CD14-positive monocyte (primary cell): ENCODE measurements at regions of chr9 and their contacts with region 1.

Region 1: DNA sequence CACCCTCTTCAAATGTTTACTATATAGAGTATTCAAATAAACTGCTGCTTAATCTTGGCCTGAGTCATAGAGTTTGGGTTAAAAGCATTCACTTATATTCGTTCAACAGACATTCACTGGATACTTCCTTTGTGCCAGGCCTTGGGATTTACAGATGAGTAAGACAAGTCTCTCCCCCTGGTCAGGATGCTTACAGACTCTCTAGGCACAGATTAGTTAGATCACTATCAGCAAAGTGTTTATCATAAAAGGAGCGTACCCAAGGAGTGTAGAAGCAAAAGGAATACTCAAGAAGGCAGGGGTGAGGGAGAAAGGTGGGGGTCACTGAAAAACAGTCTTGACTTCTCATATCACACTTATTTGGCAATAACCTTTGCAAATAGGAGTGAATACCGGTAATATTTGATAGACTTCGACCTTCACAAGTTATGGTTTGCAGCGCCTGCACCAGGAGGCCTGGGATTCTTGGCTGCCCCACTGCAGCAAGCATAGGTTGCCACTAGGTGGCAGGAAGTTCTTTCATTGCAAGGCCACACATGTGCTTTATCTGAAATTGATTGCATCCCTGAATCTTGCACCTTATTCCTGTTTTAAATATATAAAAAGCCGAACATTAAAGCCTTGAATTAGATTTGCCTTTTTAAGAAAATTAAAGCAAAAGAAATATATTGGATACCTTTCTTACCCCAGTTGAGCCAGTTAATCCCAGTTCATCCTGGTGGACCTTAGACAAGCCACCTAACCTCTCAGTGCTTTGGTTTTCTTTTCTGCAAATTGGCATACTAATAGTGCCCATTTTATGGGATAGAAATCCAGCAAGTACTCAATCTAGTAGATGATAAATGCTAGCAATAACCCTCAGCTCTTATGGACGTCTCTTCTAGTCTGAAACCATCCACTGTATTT is 6.5 kb upstream of the TRMT10B start:
- DNase-seq: peak; percentile 26 to 53 (median 48)
- H3K4me3 ChIP-seq: no peak overlapping the region
- H3K4me3 Mint-ChIP-seq: no peak overlapping the region
- H3K27ac ChIP-seq: no peak overlapping the region
- H3K27ac Mint-ChIP-seq: no peak overlapping the region
- H3K4me1 ChIP-seq: no peaks in the 10 kb centered on the region
- H3K4me1 Mint-ChIP-seq: no peaks in the 10 kb centered on the region
- H3K27me3 ChIP-seq: no peaks in the 10 kb centered on the region
- H3K27me3 Mint-ChIP-seq: peaks cover 2 to 9% (median 3%) of the 10 kb centered on the region in 3 donors
- CTCF ChIP-seq: peak; percentile 87

Region 2: GRCh38 chr9:37693260-37693659 is 53.8 kb before region 1 on chr9:
- intact Hi-C with region 1: no loop called
- DNase-seq: no peak
- H3K4me3 ChIP-seq: no peak overlapping the region
- H3K4me3 Mint-ChIP-seq: no peak overlapping the region
- H3K27ac ChIP-seq: no peak overlapping the region
- H3K27ac Mint-ChIP-seq: no peak overlapping the region
- H3K4me1 ChIP-seq: no peaks in the 10 kb centered on the region
- H3K4me1 Mint-ChIP-seq: no peaks in the 10 kb centered on the region
- H3K27me3 ChIP-seq: peaks cover 0 to 2% of the 10 kb centered on the region in 2 donors
- H3K27me3 Mint-ChIP-seq: peaks cover 2 to 3% (median 3%) of the 10 kb centered on the region in 3 donors
- CTCF ChIP-seq: no peak

Region 3: DNA sequence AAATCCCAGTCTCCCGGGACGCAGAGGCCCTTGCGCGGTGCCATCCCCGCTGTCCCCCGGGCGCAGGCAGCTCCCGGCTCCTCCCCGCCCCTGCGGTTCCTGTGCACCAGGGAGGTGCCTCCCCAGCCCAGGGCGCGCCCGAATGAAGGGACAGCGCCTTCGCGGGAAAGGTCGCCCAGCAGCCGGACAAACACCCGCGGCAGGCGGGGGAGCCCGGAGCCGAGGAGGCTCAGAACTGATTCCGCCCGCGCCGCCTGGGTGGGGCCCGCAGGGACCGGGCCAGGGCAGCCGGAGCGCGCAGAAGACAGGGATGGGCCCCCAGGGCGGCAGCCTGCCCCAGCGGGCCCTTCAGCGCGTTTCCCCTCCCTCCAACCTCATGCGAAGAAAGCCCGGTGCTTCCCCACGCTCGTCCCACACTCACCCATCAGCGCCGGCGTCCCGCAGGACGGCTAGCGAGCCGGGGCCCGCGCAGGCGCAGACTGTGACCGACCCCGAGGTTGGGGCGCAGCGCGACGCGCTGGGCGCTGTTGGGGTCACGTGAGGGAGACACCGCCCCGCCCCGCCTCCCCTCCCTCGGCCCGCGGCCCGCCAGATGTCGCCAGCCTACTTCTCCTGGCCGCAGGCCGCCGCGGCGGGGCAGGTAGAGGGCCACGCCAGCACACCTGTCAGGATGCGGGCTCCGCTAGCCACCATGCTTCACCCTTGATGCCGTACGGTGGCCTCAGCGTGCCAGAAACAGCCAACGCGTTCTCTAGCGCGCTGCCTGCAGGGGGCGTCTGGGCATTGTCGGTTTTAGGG is 156.7 kb after region 1 on chr9 and contains the start of gene SLC25A51:
- intact Hi-C with region 1: no loop called
- DNase-seq: peak; percentile 86 to 93 (median 88)
- H3K4me3 ChIP-seq: peak within 1 kb of the TSS; percentile 50 to 93 (median 84)
- H3K4me3 Mint-ChIP-seq: peak within 1 kb of the TSS; percentile 83 to 90
- H3K27ac ChIP-seq: peak within 1 kb of the TSS; percentile 64 to 91
- H3K27ac Mint-ChIP-seq: peak within 1 kb of the TSS; percentile 84 to 94 (median 91)
- H3K4me1 ChIP-seq: peaks cover 26 to 39% of the 10 kb centered on the region in 2 donors
- H3K4me1 Mint-ChIP-seq: peaks cover 33% of the 10 kb centered on the region
- H3K27me3 ChIP-seq: no peaks in the 10 kb centered on the region
- H3K27me3 Mint-ChIP-seq: peaks cover 0 to 2% (median 2%) of the 10 kb centered on the region in 3 donors
- CTCF ChIP-seq: peak; percentile 92
- polyA plus RNA-seq, gene SLC25A51: 5.9 to 12.4 (median 8.9) TPM

Region 4: DNA sequence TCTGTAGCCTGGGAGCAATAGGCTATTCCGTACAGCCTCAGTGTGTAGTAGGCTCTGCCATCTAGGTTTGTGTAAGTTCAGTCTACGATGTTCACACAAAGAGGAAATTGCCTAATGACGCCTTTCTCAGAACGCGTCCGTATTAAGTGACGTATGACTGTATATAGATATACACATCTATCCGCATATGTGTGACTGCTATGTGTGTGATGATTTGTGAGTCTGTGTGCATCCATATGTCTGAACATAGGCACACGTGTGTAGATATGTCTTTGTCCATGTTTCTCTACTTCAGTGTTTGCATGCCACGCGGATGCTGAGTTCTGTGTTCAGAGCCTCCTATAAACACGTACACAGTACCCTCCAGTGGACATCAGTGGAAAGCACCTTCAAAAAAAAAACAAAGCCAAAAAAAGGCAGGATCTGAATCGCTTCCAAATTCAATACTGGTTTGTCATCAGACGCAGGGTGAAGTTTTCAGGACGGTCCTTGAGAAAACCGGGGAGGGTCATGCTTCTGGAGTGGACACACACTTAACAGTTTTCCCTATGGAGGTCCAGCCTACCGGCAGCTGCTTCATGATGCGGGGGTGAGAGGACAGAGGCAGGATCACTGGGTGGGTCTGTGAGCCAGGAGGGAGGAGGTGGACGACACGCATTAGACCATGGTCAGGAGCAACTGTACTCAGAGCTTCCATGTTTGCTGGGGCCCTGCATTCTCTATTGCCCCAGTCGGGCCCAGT is 615.9 kb after region 1 on chr9:
- intact Hi-C with region 1: loop called in 1 of 2 experiments (anchors 5 kb)
- DNase-seq: peak; percentile 58 to 79 (median 78)
- H3K4me3 ChIP-seq: peak overlapping the region; percentile 36 to 75 (median 63)
- H3K4me3 Mint-ChIP-seq: peak overlapping the region; percentile 68 to 92
- H3K27ac ChIP-seq: peak overlapping the region in 1 of 2 donors; percentile 60
- H3K27ac Mint-ChIP-seq: peak overlapping the region; percentile 1 to 80 (median 65)
- H3K4me1 ChIP-seq: peaks cover 0 to 6% of the 10 kb centered on the region in 2 donors
- H3K4me1 Mint-ChIP-seq: peaks cover 9% of the 10 kb centered on the region
- H3K27me3 ChIP-seq: no peaks in the 10 kb centered on the region
- H3K27me3 Mint-ChIP-seq: peaks cover 1 to 2% (median 1%) of the 10 kb centered on the region in 3 donors
- CTCF ChIP-seq: peak; percentile 71

Region 5: GRCh38 chr9:38408719-38409118 is 661.6 kb after region 1 on chr9:
- intact Hi-C with region 1: loop called in 1 of 2 experiments (anchors 5 kb)
- DNase-seq: no peak
- H3K4me3 ChIP-seq: no peak overlapping the region
- H3K4me3 Mint-ChIP-seq: no peak overlapping the region
- H3K27ac ChIP-seq: no peak overlapping the region
- H3K27ac Mint-ChIP-seq: no peak overlapping the region
- H3K4me1 ChIP-seq: no peaks in the 10 kb centered on the region
- H3K4me1 Mint-ChIP-seq: no peaks in the 10 kb centered on the region
- H3K27me3 ChIP-seq: no peaks in the 10 kb centered on the region
- H3K27me3 Mint-ChIP-seq: peaks cover 1 to 11% (median 4%) of the 10 kb centered on the region in 3 donors
- CTCF ChIP-seq: no peak